ENCODE measurements at regions of chr5 and their contacts with region 1.

Region 1: GRCh38 chr5:134577796-134578363 is 52.4 kb downstream of the JADE2 start:
- DNase-seq: peak in 1 of 2 donors; percentile 88
- H3K4me3 ChIP-seq: no peak overlapping the region
- H3K27ac ChIP-seq: no peak overlapping the region
- H3K4me1 ChIP-seq: peaks cover 9 to 20% of the 10 kb centered on the region in 2 donors
- H3K27me3 ChIP-seq: no peaks in the 10 kb centered on the region
- CTCF ChIP-seq: peak; percentile 58 to 86 (median 80)

Region 2: DNA sequence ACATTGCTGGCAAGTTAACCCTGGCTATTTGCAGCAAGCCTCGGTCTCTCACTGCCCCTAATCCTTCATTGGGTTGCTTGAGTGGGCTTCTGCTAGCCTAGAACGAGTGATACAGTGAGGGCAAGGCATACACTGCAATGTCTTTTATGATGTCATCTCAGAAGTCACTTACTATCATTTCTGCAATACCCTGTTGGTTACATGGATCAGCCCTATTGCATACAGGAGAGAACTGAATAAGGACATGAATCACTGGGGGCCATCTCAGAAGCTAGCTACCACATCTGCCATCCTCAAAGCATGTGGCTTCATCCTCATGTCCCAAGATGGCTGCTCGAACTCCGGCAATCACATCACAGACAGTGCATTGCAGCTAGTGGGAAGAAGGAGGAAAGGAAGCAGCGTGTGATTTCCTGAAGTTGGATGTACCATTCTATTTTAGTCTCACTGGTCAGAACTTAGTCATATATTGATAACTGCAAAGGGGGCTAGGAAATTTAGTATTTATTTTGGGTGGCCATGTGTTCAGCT is 132.9 kb before region 1 on chr5:
- intact Hi-C with region 1: loop called (anchors 5 kb)
- DNase-seq: no peak
- H3K4me3 ChIP-seq: no peak overlapping the region
- H3K27ac ChIP-seq: no peak overlapping the region
- H3K4me1 ChIP-seq: no peaks in the 10 kb centered on the region
- H3K27me3 ChIP-seq: no peaks in the 10 kb centered on the region
- CTCF ChIP-seq: no peak

Region 3: GRCh38 chr5:134465816-134466240 is 112.1 kb before region 1 on chr5:
- intact Hi-C with region 1: loop called (anchors 5 kb)
- DNase-seq: peak; percentile 52 to 94
- H3K4me3 ChIP-seq: peak overlapping the region; percentile 64 to 68
- H3K27ac ChIP-seq: peak overlapping the region; percentile 94 to 98
- H3K4me1 ChIP-seq: peaks cover 6 to 22% of the 10 kb centered on the region in 2 donors
- H3K27me3 ChIP-seq: no peaks in the 10 kb centered on the region
- CTCF ChIP-seq: no peak

Region 4: DNA sequence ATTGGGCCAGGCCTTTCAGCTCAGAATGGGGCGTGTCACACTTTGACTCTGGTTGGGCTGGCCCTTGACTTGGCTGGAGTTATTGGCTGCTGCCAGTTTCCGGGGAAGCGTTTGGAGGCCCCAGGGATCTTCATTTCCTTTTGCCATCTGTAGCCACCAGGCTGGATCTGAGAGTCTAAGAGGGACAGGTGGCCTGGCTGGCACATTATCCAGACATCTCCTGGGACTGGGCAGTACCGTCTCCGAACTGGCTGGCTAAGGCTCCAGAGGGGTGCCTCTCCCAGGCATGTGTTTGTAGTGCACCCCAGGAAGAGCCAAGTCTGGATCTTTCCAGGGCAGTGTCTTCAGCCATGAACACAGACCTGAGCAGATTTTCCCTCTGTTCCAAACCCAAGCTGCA is 62.1 kb before region 1 on chr5:
- intact Hi-C with region 1: no loop called
- DNase-seq: no peak
- H3K4me3 ChIP-seq: no peak overlapping the region
- H3K27ac ChIP-seq: no peak overlapping the region
- H3K4me1 ChIP-seq: peaks cover 0 to 7% of the 10 kb centered on the region in 2 donors
- H3K27me3 ChIP-seq: no peaks in the 10 kb centered on the region
- CTCF ChIP-seq: no peak

Region 5: GRCh38 chr5:134714120-134714519 is 136.2 kb after region 1 on chr5:
- intact Hi-C with region 1: no loop called
- DNase-seq: no peak
- H3K4me3 ChIP-seq: no peak overlapping the region
- H3K27ac ChIP-seq: no peak overlapping the region
- H3K4me1 ChIP-seq: no peaks in the 10 kb centered on the region
- H3K27me3 ChIP-seq: no peaks in the 10 kb centered on the region
- CTCF ChIP-seq: no peak